Vagina (tissue), 2 donors: ENCODE measurements at regions of chr4 and their contacts with region 1.

Region 1: GRCh38 chr4:165327211-165328100 is at the start of gene MSMO1:
- DNase-seq: peak; percentile 98 to 100
- H3K4me3 ChIP-seq: peak within 1 kb of the TSS; percentile 75 to 89
- H3K27ac ChIP-seq: peak within 1 kb of the TSS; percentile 91
- H3K4me1 ChIP-seq: peaks cover 45% of the 10 kb centered on the region
- H3K27me3 ChIP-seq: no peaks in the 10 kb centered on the region
- CTCF ChIP-seq: no peak
- POLR2A ChIP-seq: peak; percentile 29 to 35
- total RNA-seq, gene MSMO1: 43.5 TPM

Region 2: GRCh38 chr4:165124463-165124862 is 203.0 kb before region 1 on chr4:
- intact Hi-C with region 1: loop called (anchors 10 kb)
- DNase-seq: no peak
- H3K4me3 ChIP-seq: no peak overlapping the region
- H3K27ac ChIP-seq: no peak overlapping the region
- H3K4me1 ChIP-seq: no peaks in the 10 kb centered on the region
- H3K27me3 ChIP-seq: no peaks in the 10 kb centered on the region
- CTCF ChIP-seq: no peak
- POLR2A ChIP-seq: no peak

Region 3: GRCh38 chr4:165207431-165208220 is 119.8 kb before region 1 on chr4 and contains the start of gene KLHL2:
- intact Hi-C with region 1: loop called (anchors 10 kb)
- DNase-seq: no peak
- H3K4me3 ChIP-seq: peak within 1 kb of the TSS; percentile 78 to 94
- H3K27ac ChIP-seq: peak within 1 kb of the TSS; percentile 67
- H3K4me1 ChIP-seq: peaks cover 20% of the 10 kb centered on the region
- H3K27me3 ChIP-seq: no peaks in the 10 kb centered on the region
- CTCF ChIP-seq: no peak
- POLR2A ChIP-seq: peak in 1 of 2 donors; percentile 34
- total RNA-seq, gene KLHL2: 29.5 TPM

Region 4: DNA sequence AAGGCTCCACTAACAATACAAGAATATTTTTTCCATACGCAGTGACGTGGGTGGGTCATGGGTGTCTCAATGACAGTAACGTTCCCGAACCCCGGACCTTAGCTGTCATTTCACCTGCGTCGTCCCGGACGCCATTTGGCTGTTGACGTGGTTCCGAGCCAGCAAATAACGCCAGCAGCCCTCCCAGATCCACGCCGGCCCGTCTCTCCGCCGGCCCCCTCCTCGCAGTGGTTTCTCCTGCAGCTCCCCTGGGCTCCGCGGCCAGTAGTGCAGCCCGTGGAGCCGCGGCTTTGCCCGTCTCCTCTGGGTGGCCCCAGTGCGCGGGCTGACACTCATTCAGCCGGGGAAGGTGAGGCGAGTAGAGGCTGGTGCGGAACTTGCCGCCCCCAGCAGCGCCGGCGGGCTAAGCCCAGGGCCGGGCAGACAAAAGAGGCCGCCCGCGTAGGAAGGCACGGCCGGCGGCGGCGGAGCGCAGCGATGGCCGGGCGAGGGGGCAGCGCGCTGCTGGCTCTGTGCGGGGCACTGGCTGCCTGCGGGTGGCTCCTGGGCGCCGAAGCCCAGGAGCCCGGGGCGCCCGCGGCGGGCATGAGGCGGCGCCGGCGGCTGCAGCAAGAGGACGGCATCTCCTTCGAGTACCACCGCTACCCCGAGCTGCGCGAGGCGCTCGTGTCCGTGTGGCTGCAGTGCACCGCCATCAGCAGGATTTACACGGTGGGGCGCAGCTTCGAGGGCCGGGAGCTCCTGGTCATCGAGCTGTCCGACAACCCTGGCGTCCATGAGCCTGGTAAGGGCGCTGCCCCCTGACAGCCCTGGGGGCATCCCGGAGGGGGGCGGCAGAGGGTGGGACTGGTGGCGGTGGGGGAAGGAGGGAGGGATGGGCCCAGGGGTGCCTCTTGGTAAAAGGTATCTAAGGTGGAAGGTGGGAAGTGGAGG is 51.6 kb after region 1 on chr4 and contains the start of gene CPE:
- intact Hi-C with region 1: no loop called
- DNase-seq: no peak
- H3K4me3 ChIP-seq: peak within 1 kb of the TSS; percentile 53 to 56
- H3K27ac ChIP-seq: peak within 1 kb of the TSS; percentile 73
- H3K4me1 ChIP-seq: peaks cover 4% of the 10 kb centered on the region
- H3K27me3 ChIP-seq: no peaks in the 10 kb centered on the region
- CTCF ChIP-seq: peak in 1 of 3 experiments; percentile 66
- POLR2A ChIP-seq: no peak
- total RNA-seq, gene CPE: 103 TPM